Activated naive CD4-positive, alpha-beta T cell treated with anti-CD3 and anti-CD28 coated beads for 36 hours (primary cell): ENCODE measurements at regions of chr12 and their contacts with region 1.

Region 1: DNA sequence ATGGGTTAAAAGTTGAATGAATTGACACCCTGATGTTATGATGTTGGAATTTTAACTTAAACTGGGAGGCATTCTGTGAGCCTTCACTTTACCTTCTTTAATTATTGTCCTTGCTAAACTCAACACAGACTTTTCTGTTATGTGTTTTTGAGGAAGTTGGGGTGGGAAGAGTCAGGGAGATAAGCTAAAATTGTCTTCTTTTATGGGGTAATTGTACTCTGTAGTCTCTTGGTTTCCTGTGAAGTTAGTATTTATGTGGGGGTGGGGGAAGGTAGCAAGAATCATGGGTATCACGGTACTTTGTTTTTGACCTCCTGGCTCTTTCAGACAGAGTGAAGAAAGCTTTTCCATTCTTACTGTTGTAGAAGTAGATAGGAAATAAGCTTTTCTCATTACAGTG is 32.9 kb downstream of the RAB21 start:
- DNase-seq: no peak
- H3K4me3 Mint-ChIP-seq: no peak overlapping the region
- H3K27ac Mint-ChIP-seq: peak overlapping the region; percentile 62
- H3K4me1 Mint-ChIP-seq: peaks cover 12% of the 10 kb centered on the region
- H3K27me3 Mint-ChIP-seq: no peaks in the 10 kb centered on the region

Region 2: DNA sequence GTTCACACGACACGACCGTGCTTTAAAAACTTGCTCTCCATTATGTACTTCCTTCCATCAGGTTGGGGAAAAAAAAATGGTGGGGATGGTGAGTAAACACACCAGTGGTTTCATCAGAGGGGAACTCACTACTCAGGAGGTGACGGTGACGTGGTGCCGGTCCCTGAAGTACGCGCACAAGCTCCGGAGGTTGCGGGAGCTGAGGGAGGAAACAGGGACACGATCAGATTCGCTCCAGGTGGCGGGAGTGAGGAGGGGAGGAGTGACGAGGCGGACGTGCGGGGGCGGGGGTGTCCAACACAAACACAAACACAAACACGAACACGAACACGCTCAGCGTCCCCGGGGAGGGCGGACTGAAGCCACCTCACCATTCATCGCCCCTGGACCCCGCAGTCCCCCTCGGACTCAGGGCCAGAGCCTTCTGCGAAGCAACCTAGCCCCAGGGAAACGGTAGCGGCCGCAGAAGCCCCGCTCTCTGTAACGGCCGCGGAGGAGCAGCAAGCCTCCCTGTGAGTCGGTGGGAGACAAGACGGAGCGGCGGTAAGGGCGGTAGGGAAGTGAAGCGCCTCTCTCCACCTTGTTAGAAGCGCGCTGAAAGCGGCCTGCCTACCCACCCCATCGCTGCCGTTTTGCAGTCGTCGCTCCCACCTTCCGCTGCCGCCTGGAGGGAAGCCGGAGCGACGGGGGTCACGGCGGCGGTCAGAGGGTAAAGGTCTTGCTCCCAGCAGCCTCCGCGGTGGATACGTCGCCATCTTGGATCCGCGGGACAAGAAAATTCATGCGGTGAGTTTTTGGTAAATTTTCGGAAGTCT is 1544.7 kb before region 1 on chr12 and contains the start of gene CNOT2:
- CTCF ChIA-PET with region 1: no interaction called
- intact Hi-C with region 1: no loop called
- DNase-seq: peak; percentile 94
- H3K4me3 Mint-ChIP-seq: peak within 1 kb of the TSS; percentile 99
- H3K27ac Mint-ChIP-seq: peak within 1 kb of the TSS; percentile 100
- H3K4me1 Mint-ChIP-seq: peaks cover 48% of the 10 kb centered on the region
- H3K27me3 Mint-ChIP-seq: no peaks in the 10 kb centered on the region
- total RNA-seq, gene CNOT2: 66.0 to 66.2 TPM

Region 3: DNA sequence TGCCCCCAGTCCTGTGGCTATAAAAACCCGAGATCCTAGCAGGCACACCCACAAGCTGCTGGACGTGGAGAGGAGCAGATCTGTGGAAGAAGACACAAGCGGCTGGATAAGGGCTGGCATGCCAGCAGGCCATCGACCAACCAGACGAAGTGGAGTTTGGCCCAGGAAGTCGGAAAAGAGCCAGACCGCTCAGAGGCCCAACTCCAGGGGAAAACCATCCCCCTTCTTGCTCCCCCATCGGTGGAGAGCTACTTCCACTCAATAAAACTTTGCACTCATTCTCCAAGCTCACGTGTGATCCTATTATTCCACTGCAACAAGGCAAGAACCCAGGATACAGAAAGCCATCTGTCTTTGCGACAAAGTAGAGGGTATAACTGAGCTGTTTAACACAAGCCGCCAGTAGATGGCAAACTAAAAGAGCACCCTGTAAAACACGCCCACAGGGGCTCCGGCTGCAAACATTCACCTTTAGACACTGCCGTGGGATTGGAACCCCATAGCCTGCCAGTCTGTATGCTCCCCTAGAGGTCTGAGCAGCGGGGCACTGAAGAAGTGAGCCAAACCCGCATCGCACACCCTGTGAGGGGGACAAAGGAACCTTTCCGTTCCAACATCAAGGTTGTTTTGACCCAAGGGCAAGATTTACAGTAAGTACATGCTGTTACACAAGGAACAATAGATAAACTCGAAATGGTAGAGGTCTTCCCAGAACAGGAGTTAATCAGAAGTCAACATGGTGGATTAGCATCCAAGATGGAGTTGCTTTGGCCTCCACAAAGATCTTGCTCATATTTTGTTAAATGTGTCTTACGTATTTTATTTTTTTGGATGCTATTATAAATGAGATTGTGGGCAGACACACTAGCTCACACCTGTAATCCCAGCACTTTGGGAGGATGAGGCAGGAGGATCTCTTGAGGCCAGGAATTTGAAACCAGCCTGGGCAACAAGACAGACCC is 55.5 kb before region 1 on chr12:
- CTCF ChIA-PET with region 1: no interaction called
- intact Hi-C with region 1: no loop called
- DNase-seq: no peak
- H3K4me3 Mint-ChIP-seq: no peak overlapping the region
- H3K27ac Mint-ChIP-seq: no peak overlapping the region
- H3K4me1 Mint-ChIP-seq: no peaks in the 10 kb centered on the region
- H3K27me3 Mint-ChIP-seq: no peaks in the 10 kb centered on the region

Region 4: DNA sequence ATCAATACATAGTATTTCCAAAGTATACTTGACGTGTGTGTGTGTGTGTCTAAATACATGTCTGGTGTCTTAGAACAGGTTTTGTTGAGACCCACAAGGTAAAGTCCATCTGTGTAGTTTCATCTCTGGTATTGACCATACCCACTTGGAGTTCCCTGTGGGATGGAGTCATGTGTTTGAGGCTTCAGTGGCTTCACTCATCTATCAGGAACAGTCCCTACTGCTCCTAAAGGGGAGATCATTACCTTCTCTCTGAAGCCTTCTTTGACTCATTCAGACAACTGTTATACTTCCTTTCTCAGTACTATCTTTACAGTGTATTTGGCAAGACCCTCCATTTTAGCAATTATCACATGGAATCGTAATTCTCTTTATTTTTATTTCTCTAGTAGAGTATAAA is 18.7 kb before region 1 on chr12:
- CTCF ChIA-PET with region 1: no interaction called
- intact Hi-C with region 1: no loop called
- DNase-seq: no peak
- H3K4me3 Mint-ChIP-seq: no peak overlapping the region
- H3K27ac Mint-ChIP-seq: no peak overlapping the region
- H3K4me1 Mint-ChIP-seq: peaks cover 54% of the 10 kb centered on the region
- H3K27me3 Mint-ChIP-seq: no peaks in the 10 kb centered on the region

Region 5: DNA sequence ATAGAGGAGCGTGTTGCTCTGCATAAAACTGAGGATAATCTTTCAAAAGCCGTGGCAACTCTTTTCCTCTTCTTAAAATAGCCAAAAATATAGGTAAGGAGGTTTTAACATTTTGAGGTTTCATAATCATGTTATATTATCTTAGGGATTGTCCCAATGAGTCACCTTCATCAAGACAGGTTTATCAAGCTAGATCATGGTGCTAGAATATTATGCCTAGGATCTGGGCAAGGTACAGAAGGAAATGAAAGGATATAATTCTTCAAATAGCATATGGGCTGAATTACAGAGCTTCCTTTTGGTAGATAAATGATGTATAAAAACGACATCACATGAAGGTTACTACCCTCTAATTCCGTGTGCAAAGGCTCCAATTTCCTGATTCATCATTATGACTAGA is 23.3 kb after region 1 on chr12:
- CTCF ChIA-PET with region 1: no interaction called
- intact Hi-C with region 1: loop called (anchors 2 kb)
- DNase-seq: no peak
- H3K4me3 Mint-ChIP-seq: no peak overlapping the region
- H3K27ac Mint-ChIP-seq: no peak overlapping the region
- H3K4me1 Mint-ChIP-seq: no peaks in the 10 kb centered on the region
- H3K27me3 Mint-ChIP-seq: peaks cover 10% of the 10 kb centered on the region